ENCODE measurements at regions of chr19 and their contacts with region 1.

Region 1: GRCh38 chr19:34501339-34502320 is 20.1 kb downstream of the WTIP start:
- H3K4me3 ChIP-seq: no peak overlapping the region
- H3K27ac ChIP-seq: no peak overlapping the region
- H3K4me1 ChIP-seq: no peaks in the 10 kb centered on the region; the same call in 1 of the 2 replicates
- CTCF ChIP-seq: peak; percentile 100

Region 2: GRCh38 chr19:34471906-34472700 is 29.5 kb before region 1 on chr19:
- CTCF ChIA-PET with region 1: interaction called, 16 read pairs
- POLR2A ChIA-PET with region 1: no interaction called
- H3K4me3 ChIP-seq: no peak overlapping the region
- H3K27ac ChIP-seq: no peak overlapping the region
- H3K4me1 ChIP-seq: no peaks in the 10 kb centered on the region; the same call in 1 of the 2 replicates
- CTCF ChIP-seq: no peak

Region 3: DNA sequence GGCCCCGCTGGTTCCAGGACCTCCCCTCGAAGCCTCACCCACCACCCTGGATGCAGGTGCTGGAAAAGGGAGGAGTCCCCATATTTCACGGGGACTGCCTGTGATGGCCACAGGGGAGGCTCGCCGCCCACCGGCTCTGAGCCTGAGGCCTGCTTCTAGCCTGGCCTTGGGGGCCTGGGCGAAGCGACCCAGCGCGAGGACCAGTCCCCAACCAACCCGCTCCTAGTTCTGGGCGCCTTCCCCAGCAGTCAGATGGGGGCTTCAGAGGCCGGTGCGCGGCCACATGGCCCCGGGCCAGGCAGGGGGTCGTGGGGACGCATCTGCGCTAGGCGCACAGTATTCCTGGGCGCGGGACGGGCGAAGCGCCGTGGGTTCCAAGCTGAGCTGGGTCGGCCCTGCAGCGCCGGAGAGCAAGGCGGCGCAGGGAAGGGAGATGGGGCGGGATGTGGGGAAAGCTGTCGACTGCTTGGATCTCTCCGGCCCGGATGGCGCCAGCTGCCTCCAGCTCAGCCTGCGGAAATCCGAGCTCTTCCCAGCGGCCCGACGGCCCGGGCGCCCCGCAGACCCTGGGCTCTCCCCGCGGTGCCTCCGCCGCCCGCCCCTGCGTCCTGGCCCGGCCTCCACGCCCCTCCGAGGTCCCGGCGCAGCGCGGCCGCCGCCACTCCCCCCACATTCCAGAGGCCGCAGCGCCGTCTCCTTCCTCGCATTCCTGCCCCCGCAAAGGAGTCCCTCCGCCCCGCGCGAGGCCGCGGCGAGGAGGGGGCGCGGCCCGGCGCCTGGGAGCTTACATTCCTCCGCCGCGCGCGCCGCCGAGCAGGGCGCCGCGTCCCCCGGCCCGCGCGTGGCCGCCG is 20.4 kb before region 1 on chr19 and contains the start of gene WTIP:
- CTCF ChIA-PET with region 1: interaction called, 18 read pairs
- POLR2A ChIA-PET with region 1: interaction called, 8 read pairs
- H3K4me3 ChIP-seq: peak within 1 kb of the TSS; percentile 48
- H3K27ac ChIP-seq: peak within 1 kb of the TSS; percentile 82; the same call in 1 of the 2 replicates
- H3K4me1 ChIP-seq: peaks cover 10% of the 10 kb centered on the region; the same call in 1 of the 2 replicates
- CTCF ChIP-seq: no peak

Region 4: GRCh38 chr19:34490141-34490766 is 11.4 kb before region 1 on chr19:
- CTCF ChIA-PET with region 1: interaction called, 18 read pairs
- POLR2A ChIA-PET with region 1: interaction called, 8 read pairs
- H3K4me3 ChIP-seq: no peak overlapping the region
- H3K27ac ChIP-seq: no peak overlapping the region
- H3K4me1 ChIP-seq: no peaks in the 10 kb centered on the region
- CTCF ChIP-seq: no peak

Region 5: GRCh38 chr19:34519602-34520001 is 18.0 kb after region 1 on chr19:
- CTCF ChIA-PET with region 1: interaction called, 12 read pairs
- POLR2A ChIA-PET with region 1: no interaction called
- H3K4me3 ChIP-seq: no peak overlapping the region
- H3K27ac ChIP-seq: no peak overlapping the region
- H3K4me1 ChIP-seq: no peaks in the 10 kb centered on the region
- CTCF ChIP-seq: no peak